PC-9 (cell line): ENCODE measurements at regions of chr1 and their contacts with region 1.

Region 1: GRCh38 chr1:40257688-40258444 is at the start of gene ZMPSTE24:
- DNase-seq: peak; percentile 93 to 96
- H3K4me3 ChIP-seq: peak within 1 kb of the TSS; percentile 99
- H3K27ac ChIP-seq: peak within 1 kb of the TSS; percentile 96
- H3K4me1 ChIP-seq: peaks cover 11% of the 10 kb centered on the region
- H3K27me3 ChIP-seq: no peaks in the 10 kb centered on the region
- CTCF ChIP-seq: no peak
- total RNA-seq, gene ZMPSTE24: 36.9 and 55.8 TPM in 2 replicates

Region 2: GRCh38 chr1:40014253-40014714 is 243.6 kb before region 1 on chr1:
- CTCF ChIA-PET with region 1: interaction called, 10 read pairs
- POLR2A ChIA-PET with region 1: no interaction called
- intact Hi-C with region 1: no loop called
- DNase-seq: peak in 1 of 2 experiments; percentile 74
- H3K4me3 ChIP-seq: no peak overlapping the region
- H3K27ac ChIP-seq: peak overlapping the region; percentile 58; the same call in 1 of the 2 replicates
- H3K4me1 ChIP-seq: peaks cover 21% of the 10 kb centered on the region
- H3K27me3 ChIP-seq: no peaks in the 10 kb centered on the region
- CTCF ChIP-seq: no peak

Region 3: DNA sequence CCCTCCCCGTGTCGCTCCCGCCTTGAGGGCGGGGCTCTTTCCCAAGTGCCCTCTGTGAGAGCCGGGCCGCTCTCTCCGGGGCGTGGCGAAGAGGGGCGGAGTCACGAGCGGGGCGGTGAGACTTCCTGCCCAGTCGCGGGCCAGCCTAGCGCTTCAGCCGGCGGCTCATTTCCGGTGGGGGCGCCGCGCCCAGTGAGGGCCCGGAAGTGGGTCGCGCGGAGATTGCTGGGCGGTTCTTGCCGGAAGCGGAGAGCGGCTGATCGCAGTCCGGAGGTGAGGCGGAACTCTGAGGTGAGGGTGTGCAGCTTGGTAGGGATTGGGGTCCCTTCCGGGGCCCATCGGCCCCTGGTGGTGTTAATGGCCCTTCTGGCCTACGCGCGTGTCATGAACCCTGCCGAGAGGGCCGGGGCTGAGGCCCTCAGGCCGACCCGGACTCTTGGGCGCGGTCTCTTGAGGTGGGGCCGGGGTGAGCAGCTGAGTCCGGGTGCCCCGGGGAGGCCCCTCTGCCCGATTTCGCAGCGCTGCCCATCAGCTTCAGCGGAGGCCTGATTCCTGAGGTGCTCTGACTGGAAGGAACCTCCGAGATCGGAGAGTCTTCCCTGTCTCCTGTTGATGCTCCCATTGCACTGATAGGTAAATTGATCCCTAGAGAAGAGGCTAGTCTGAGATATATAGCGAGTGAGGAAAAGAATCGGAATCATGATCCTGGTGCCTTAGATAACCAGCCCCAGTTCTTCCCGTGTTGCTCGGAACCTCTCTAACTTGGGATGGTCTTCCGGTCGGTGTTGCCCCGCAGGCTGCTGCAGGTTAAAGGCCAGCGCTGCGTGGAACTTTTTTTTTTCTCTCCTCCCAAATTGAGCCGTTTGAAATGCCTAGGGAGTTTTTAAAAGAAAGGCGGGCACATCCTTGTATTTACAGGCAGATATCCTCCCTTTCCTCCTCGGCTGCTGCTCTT is 217.1 kb before region 1 on chr1 and contains the start of gene CAP1:
- CTCF ChIA-PET with region 1: no interaction called
- POLR2A ChIA-PET with region 1: no interaction called
- intact Hi-C with region 1: loop called (anchors 1 kb)
- DNase-seq: peak; percentile 94 to 100
- H3K4me3 ChIP-seq: peak within 1 kb of the TSS; percentile 99
- H3K27ac ChIP-seq: peak within 1 kb of the TSS; percentile 98
- H3K4me1 ChIP-seq: peaks cover 36% of the 10 kb centered on the region
- H3K27me3 ChIP-seq: no peaks in the 10 kb centered on the region
- CTCF ChIP-seq: no peak
- total RNA-seq, gene CAP1: 322 and 354 TPM in 2 replicates

Region 4: DNA sequence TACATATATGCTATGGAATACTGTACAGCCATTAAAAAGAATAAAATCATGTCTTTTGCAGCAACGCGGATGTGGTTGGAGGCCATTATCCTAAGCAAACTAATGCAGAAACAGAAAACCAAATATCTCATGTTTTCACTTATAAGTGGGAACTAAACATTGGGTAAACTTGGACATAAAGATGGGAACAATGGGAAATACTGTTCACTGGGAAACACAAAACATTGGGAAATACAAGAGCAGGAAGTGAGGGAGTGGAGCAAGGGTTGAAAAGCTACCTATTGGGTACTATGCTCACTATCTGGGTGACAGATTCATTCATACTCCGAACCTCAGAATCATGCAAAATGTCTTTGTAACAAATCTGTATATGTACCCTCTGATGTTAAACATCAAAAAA is 143.5 kb before region 1 on chr1:
- CTCF ChIA-PET with region 1: no interaction called
- POLR2A ChIA-PET with region 1: no interaction called
- intact Hi-C with region 1: no loop called
- DNase-seq: no peak
- H3K4me3 ChIP-seq: no peak overlapping the region
- H3K27ac ChIP-seq: no peak overlapping the region
- H3K4me1 ChIP-seq: peaks cover 7% of the 10 kb centered on the region
- H3K27me3 ChIP-seq: no peaks in the 10 kb centered on the region
- CTCF ChIP-seq: no peak

Region 5: DNA sequence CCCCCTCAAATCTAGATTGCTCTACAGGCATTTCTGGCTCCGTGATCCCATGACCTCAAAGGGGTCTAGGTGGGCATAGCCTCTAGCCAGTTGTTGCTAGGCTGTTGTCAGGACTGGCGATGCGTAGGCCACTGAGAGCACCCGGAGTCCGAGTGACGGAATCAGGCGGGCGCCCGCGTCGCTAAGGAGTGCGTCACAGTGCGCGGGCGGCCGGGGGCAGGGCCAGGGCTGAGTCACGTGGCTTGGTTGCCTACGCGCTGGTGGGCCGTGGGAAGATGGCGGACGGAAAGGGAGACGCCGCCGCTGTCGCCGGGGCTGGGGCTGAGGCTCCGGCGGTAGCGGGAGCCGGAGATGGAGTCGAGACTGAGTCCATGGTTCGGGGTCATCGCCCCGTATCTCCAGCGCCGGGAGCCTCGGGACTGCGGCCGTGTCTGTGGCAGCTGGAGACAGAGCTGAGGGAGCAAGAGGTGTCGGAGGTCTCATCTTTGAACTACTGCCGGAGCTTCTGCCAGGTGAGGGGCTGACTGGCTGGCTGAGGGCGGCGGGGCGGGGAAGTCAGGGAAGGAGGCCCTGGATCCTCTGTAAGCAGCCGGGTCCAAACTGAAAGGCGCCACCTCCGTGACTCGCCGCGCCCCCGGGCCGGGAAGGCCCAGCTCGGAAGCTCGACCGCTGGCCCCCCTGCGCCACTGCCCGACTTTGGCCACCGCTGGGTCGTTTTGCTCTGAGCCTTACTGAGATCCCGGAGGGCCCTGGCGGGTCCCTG is 96.6 kb before region 1 on chr1 and contains the start of gene RLF:
- CTCF ChIA-PET with region 1: no interaction called
- POLR2A ChIA-PET with region 1: interaction called, 3 read pairs
- intact Hi-C with region 1: loop called (anchors 1 kb)
- DNase-seq: peak; percentile 80 to 95
- H3K4me3 ChIP-seq: peak within 1 kb of the TSS; percentile 98
- H3K27ac ChIP-seq: peak within 1 kb of the TSS; percentile 63
- H3K4me1 ChIP-seq: peaks cover 43% of the 10 kb centered on the region
- H3K27me3 ChIP-seq: no peaks in the 10 kb centered on the region
- CTCF ChIP-seq: no peak
- total RNA-seq, gene RLF: 14.2 and 15.5 TPM in 2 replicates

Region 6: DNA sequence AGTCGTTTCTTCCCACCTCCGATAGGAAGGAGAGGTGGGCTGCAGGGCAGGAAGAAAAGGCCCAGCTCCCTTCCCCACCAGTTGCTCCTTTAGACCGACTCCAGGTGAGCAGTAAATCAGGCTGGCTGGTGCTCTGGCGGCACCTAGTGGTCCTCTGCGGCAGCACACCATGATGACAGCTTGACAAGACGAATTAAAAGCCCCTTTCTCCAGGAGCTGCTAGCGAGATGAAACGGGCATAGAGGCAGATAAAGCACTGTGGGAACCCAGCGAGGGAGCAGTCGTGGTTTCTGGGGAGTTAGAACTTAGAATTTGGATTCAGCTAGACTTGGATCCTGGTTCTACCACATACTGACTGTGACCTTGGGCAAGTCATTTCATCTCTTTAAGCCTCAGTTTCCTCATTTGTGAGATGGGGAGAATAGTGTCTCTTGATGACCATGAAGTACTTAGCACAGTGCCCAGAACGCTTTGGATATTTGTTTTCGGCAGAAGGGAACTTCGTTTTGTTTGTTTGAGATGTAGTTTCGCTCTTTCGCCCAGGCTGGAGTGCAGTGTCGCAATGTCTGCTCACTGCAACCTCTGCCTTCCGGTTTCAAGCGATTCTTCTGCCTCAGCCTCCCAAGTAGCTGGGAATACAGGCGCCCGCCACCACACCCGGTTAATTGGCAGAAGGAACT is 81.0 kb after region 1 on chr1:
- CTCF ChIA-PET with region 1: interaction called, 3 read pairs
- POLR2A ChIA-PET with region 1: no interaction called
- intact Hi-C with region 1: loop called (anchors 5 kb)
- DNase-seq: peak; percentile 71 to 93
- H3K4me3 ChIP-seq: no peak overlapping the region; the same call in 1 of the 2 replicates
- H3K27ac ChIP-seq: no peak overlapping the region
- H3K4me1 ChIP-seq: peaks cover 10% of the 10 kb centered on the region
- H3K27me3 ChIP-seq: no peaks in the 10 kb centered on the region
- CTCF ChIP-seq: peak; percentile 98

Region 7: GRCh38 chr1:40709100-40709801 is 451.4 kb after region 1 on chr1:
- CTCF ChIA-PET with region 1: no interaction called
- POLR2A ChIA-PET with region 1: interaction called, 27 read pairs
- intact Hi-C with region 1: no loop called
- DNase-seq: peak; percentile 82 to 94
- H3K4me3 ChIP-seq: peak overlapping the region; percentile 62
- H3K27ac ChIP-seq: peak overlapping the region; percentile 21
- H3K4me1 ChIP-seq: peaks cover 43% of the 10 kb centered on the region
- H3K27me3 ChIP-seq: no peaks in the 10 kb centered on the region
- CTCF ChIP-seq: no peak